ENCODE measurements at regions of chr4 and their contacts with region 1.

Region 1: GRCh38 chr4:15362541-15362940 is 65.3 kb upstream of the C1QTNF7 start:
- DNase-seq: no peak
- H3K4me3 ChIP-seq: no peak overlapping the region
- H3K27ac ChIP-seq: no peak overlapping the region
- H3K4me1 ChIP-seq: no peaks in the 10 kb centered on the region
- H3K27me3 ChIP-seq: peaks cover 4% of the 10 kb centered on the region
- CTCF ChIP-seq: no peak

Region 2: DNA sequence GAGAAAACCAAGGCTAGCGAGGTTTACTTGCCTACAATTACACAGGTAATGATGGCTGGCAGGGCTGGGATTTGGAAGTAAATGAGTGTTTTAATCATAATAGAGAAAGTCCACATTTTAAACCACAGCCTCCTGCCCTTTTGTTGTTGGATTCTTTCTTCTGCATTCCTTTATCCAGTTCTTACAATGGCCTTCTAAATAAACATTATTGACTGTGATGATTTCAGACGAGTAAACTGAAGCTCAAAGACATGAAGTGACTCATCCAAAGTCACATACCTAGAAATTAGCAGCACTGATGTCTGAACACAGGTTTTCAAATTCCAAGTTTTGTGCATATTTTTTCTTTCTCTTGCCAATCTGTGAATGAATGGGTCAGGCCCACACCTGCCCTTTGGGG is 14.1 kb after region 1 on chr4:
- CTCF ChIA-PET with region 1: interaction called, 12 read pairs
- dilution Hi-C with region 1: no loop called
- in situ Hi-C with region 1: no loop called
- intact Hi-C with region 1: no loop called
- DNase-seq: peak; percentile 29
- H3K4me3 ChIP-seq: no peak overlapping the region
- H3K27ac ChIP-seq: no peak overlapping the region
- H3K4me1 ChIP-seq: peaks cover 16% of the 10 kb centered on the region
- H3K27me3 ChIP-seq: no peaks in the 10 kb centered on the region
- CTCF ChIP-seq: no peak